ENCODE measurements at regions of chr15 and their contacts with region 1.

Region 1: GRCh38 chr15:77821188-77821958 is 188.7 kb upstream of the LINGO1 start:
- DNase-seq: peak; percentile 41 to 87
- H3K4me3 ChIP-seq: no peak overlapping the region
- H3K27ac ChIP-seq: no peak overlapping the region
- H3K4me1 ChIP-seq: peaks cover 0 to 18% (median 11%) of the 10 kb centered on the region in 4 experiments; a peak in 6 of 7 replicates
- H3K27me3 ChIP-seq: peaks cover 23 to 42% (median 39%) of the 10 kb centered on the region in 4 experiments
- CTCF ChIP-seq: peak; percentile 94 to 98 (median 95)
- EP300 ChIP-seq: no peak
- POLR2A ChIP-seq: no peak
- RAD21 ChIP-seq: peak; percentile 92 to 96

Region 2: GRCh38 chr15:77617476-77618230 is 203.7 kb before region 1 on chr15:
- CTCF ChIA-PET with region 1: interaction called, 16 read pairs
- POLR2A ChIA-PET with region 1: no interaction called
- DNase-seq: no peak
- H3K4me3 ChIP-seq: no peak overlapping the region
- H3K27ac ChIP-seq: no peak overlapping the region
- H3K4me1 ChIP-seq: peaks cover 0 to 30% (median 18%) of the 10 kb centered on the region in 4 experiments; a peak in 6 of 7 replicates
- H3K27me3 ChIP-seq: no peaks in the 10 kb centered on the region
- CTCF ChIP-seq: peak in 2 of 3 experiments; percentile 71 to 84; a peak in 3 of 4 replicates
- EP300 ChIP-seq: no peak
- POLR2A ChIP-seq: no peak
- RAD21 ChIP-seq: peak; percentile 47 to 58; a peak in 3 of 4 replicates

Region 3: DNA sequence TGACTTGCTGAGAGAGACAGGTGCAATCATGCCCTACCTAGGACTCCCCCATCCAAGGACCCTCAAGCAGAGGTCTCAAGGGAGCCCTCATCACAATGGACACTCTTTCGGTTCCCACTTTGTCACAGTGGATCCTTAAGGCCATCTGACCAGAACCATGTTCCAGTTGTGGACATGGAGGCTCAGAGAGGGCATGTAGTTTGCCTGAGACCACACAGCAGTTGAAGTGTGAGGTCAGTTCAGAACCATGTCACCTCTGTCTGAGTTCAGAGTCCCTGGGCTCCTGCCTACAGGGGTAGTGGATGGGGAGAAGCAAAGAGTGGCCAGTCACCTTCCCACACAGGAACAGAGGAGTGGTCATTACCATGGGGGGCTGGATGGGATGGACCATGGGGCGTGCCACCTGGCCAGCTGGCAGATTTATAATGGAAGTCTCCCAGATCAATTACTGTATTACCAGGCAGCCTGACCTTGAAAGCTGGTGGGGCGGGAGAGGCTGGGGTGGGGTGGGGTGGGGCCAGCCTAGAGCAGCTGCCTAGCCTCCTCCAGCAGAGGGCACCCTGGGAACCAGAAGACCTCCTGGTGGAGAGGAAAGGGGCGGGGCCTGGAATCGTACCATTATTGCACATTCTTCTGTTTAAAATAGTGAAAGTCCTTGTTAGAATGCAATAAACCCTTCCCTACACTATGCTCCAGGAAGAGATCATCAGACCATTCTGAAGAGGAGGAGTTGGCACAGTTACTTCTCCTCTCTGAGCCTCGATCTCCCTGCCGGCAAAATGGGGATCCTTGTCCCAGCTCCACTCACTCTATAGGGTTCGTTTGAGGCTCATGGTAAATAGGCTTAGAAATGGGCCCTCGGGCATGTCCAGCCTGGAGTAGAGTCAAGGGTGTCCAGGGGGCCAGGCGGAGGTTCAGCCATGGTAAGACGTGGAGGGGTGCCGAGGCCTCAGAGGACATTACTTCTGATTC is 161.7 kb before region 1 on chr15:
- CTCF ChIA-PET with region 1: interaction called, 158 read pairs
- POLR2A ChIA-PET with region 1: interaction called, 4 read pairs
- DNase-seq: peak in 1 of 2 experiments; percentile 76
- H3K4me3 ChIP-seq: no peak overlapping the region
- H3K27ac ChIP-seq: no peak overlapping the region
- H3K4me1 ChIP-seq: peaks cover 0 to 16% (median 10%) of the 10 kb centered on the region in 4 experiments; a peak in 5 of 7 replicates
- H3K27me3 ChIP-seq: no peaks in the 10 kb centered on the region
- CTCF ChIP-seq: peak; percentile 53 to 66 (median 55); a peak in 3 of 4 replicates
- EP300 ChIP-seq: no peak
- POLR2A ChIP-seq: no peak
- RAD21 ChIP-seq: peak; percentile 55 to 64

Region 4: GRCh38 chr15:77717333-77717990 is 103.9 kb before region 1 on chr15:
- CTCF ChIA-PET with region 1: interaction called, 11 read pairs
- POLR2A ChIA-PET with region 1: no interaction called
- DNase-seq: no peak
- H3K4me3 ChIP-seq: no peak overlapping the region
- H3K27ac ChIP-seq: no peak overlapping the region
- H3K4me1 ChIP-seq: peaks cover 0 to 5% (median 1%) of the 10 kb centered on the region in 4 experiments; a peak in 3 of 7 replicates
- H3K27me3 ChIP-seq: no peaks in the 10 kb centered on the region
- CTCF ChIP-seq: no peak
- EP300 ChIP-seq: no peak
- POLR2A ChIP-seq: no peak
- RAD21 ChIP-seq: no peak

Region 5: GRCh38 chr15:77753270-77753873 is 68.0 kb before region 1 on chr15:
- CTCF ChIA-PET with region 1: interaction called, 21 read pairs
- POLR2A ChIA-PET with region 1: no interaction called
- DNase-seq: peak in 1 of 2 experiments; percentile 82
- H3K4me3 ChIP-seq: no peak overlapping the region
- H3K27ac ChIP-seq: no peak overlapping the region
- H3K4me1 ChIP-seq: peaks cover 0 to 2% (median under 1%) of the 10 kb centered on the region in 4 experiments; a peak in 2 of 7 replicates
- H3K27me3 ChIP-seq: peaks cover 0 to 11% (median 1%) of the 10 kb centered on the region in 4 experiments; a peak in 2 of 7 replicates
- CTCF ChIP-seq: no peak
- EP300 ChIP-seq: no peak
- POLR2A ChIP-seq: no peak
- RAD21 ChIP-seq: peak; percentile 1 to 10; a peak in 1 of 4 replicates

Region 6: GRCh38 chr15:77804210-77804609 is 17.2 kb before region 1 on chr15:
- CTCF ChIA-PET with region 1: interaction called, 19 read pairs
- POLR2A ChIA-PET with region 1: no interaction called
- DNase-seq: no peak
- H3K4me3 ChIP-seq: no peak overlapping the region
- H3K27ac ChIP-seq: no peak overlapping the region
- H3K4me1 ChIP-seq: peaks cover 0 to 10% (median 1%) of the 10 kb centered on the region in 4 experiments; a peak in 3 of 7 replicates
- H3K27me3 ChIP-seq: no peaks in the 10 kb centered on the region
- CTCF ChIP-seq: no peak
- EP300 ChIP-seq: no peak
- POLR2A ChIP-seq: no peak
- RAD21 ChIP-seq: no peak

Region 7: GRCh38 chr15:77856718-77857346 is 35.5 kb after region 1 on chr15:
- CTCF ChIA-PET with region 1: interaction called, 15 read pairs
- POLR2A ChIA-PET with region 1: no interaction called
- DNase-seq: no peak
- H3K4me3 ChIP-seq: no peak overlapping the region
- H3K27ac ChIP-seq: no peak overlapping the region
- H3K4me1 ChIP-seq: peaks cover 0 to 3% (median 0%) of the 10 kb centered on the region in 4 experiments; a peak in 1 of 7 replicates
- H3K27me3 ChIP-seq: no peaks in the 10 kb centered on the region; a peak in 1 of 7 replicates
- CTCF ChIP-seq: no peak
- EP300 ChIP-seq: no peak
- POLR2A ChIP-seq: no peak
- RAD21 ChIP-seq: no peak